ENCODE measurements at regions of chr10 and their contacts with region 1.

Region 1: DNA sequence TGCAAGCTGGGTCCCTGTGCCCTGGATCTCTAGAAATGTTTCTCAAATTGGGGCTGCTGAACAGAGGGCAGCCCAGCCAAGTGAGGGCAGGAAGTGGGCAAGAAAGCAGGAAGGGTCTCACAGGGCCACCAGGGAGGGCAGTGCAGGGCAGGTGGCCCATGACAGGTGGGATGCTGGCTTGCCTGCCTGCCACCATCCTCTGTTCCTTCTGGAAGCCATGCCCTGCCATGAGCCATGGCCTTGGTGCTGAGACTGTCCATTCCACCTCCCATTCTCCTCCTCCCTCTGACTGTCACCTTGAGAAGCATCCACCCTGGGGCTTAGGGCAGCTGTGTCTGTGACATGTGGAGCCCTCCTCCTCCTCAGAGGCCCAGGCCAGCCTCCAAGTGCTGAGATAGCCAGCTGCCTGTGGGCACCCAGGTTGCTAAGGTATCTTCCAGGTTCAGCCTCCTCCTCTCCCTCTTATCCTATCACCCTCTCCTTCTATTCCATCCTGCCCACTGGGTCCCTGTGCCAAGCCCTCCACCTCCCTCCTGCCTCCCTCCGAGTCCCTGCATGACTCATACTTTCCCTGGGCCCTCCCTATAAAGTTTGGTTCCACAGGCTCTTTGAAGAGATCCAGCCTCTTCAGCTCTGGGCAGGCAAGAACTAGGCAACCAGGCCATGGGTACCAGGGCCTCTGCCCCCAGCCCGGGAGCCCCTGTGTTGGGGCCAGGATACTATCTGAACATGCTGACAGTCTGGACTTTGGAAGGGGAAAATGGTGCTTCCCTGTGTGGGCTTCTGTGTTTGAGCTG is 1.3 kb downstream of the VSIR start:
- DNase-seq: peak; percentile 47
- H3K4me3 Mint-ChIP-seq: peak overlapping the region; percentile 90
- H3K27ac Mint-ChIP-seq: peak overlapping the region; percentile 91
- H3K4me1 Mint-ChIP-seq: peaks cover 81% of the 10 kb centered on the region
- H3K27me3 Mint-ChIP-seq: no peaks in the 10 kb centered on the region

Region 2: GRCh38 chr10:71708301-71708703 is 63.7 kb before region 1 on chr10:
- CTCF ChIA-PET with region 1: interaction called, 28 read pairs
- POLR2A ChIA-PET with region 1: interaction called, 10 read pairs
- DNase-seq: peak; percentile 73
- H3K4me3 Mint-ChIP-seq: no peak overlapping the region
- H3K27ac Mint-ChIP-seq: no peak overlapping the region
- H3K4me1 Mint-ChIP-seq: peaks cover 32% of the 10 kb centered on the region
- H3K27me3 Mint-ChIP-seq: no peaks in the 10 kb centered on the region

Region 3: GRCh38 chr10:71719042-71719441 is 53.0 kb before region 1 on chr10:
- CTCF ChIA-PET with region 1: interaction called, 78 read pairs
- POLR2A ChIA-PET with region 1: interaction called, 162 read pairs
- DNase-seq: no peak
- H3K4me3 Mint-ChIP-seq: no peak overlapping the region
- H3K27ac Mint-ChIP-seq: no peak overlapping the region
- H3K4me1 Mint-ChIP-seq: peaks cover 33% of the 10 kb centered on the region
- H3K27me3 Mint-ChIP-seq: no peaks in the 10 kb centered on the region

Region 4: DNA sequence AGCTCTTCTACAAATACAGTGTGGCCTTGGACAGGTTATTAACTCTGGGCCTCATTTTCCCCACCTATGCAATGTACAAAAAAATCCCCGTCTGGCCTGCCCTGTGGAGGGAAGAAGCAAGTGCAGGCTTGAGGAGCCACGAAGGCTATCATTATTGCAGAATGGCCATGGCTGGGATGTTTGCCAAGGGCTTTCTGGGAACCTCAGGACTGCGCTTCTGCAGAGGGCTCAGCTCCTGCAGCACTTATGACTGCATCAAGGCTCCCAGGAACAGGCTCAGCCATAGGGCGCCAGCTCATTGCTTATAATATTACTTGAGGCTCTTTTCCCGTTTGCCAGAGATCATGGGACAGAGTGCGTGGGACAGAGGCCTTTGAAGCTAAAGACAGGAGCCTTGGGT is 31.9 kb before region 1 on chr10:
- CTCF ChIA-PET with region 1: interaction called, 20 read pairs
- POLR2A ChIA-PET with region 1: interaction called, 62 read pairs
- DNase-seq: no peak
- H3K4me3 Mint-ChIP-seq: no peak overlapping the region
- H3K27ac Mint-ChIP-seq: no peak overlapping the region
- H3K4me1 Mint-ChIP-seq: peaks cover 90% of the 10 kb centered on the region
- H3K27me3 Mint-ChIP-seq: no peaks in the 10 kb centered on the region

Region 5: DNA sequence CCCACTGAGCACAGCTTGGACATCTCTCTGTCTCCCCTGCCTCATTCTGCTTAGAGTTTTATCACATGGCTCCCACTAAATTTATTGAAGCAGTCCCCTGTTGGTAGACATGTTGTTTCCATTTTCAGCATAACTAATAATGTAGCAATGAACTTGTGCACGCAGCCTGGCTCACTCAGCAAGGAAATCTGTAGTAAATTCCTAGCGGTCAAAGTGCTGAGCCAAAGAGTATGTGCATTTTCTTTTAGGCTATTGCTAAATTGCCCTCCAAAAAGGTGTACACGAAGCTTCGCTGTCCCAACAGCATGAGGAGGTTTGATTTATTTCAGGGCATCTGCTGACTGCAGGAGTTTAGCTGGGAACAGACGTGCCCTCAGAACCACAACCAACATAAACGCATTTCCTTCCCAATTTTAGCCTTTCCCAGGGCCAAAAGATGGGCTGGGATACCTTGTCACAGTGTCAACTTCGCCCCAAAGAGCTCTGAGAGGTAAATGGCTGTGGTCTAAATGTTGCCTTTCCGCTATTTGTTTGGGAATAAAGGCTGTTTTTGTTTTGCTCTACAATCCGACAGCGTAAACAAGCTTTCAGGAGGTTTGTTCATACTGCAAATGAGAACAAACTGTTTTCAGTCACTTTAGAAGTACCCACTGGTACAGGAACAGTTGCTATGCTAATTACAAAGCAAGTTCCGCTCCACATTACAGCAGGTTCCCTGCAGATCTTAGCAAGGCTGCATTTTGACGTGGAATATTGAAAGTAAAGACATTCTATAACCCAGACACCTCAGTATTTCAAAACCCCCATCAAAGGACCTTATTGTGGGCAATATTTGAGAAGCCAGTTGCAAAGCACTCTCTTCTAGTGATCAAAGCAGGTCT is 15.5 kb before region 1 on chr10:
- CTCF ChIA-PET with region 1: interaction called, 42 read pairs
- POLR2A ChIA-PET with region 1: interaction called, 142 read pairs
- DNase-seq: no peak
- H3K4me3 Mint-ChIP-seq: peak overlapping the region; percentile 21
- H3K27ac Mint-ChIP-seq: peak overlapping the region; percentile 87
- H3K4me1 Mint-ChIP-seq: peaks cover 78% of the 10 kb centered on the region
- H3K27me3 Mint-ChIP-seq: no peaks in the 10 kb centered on the region

Region 6: GRCh38 chr10:72162978-72163377 is 391.0 kb after region 1 on chr10:
- CTCF ChIA-PET with region 1: no interaction called
- POLR2A ChIA-PET with region 1: no interaction called
- DNase-seq: no peak
- H3K4me3 Mint-ChIP-seq: no peak overlapping the region
- H3K27ac Mint-ChIP-seq: peak overlapping the region; percentile 11
- H3K4me1 Mint-ChIP-seq: peaks cover 16% of the 10 kb centered on the region
- H3K27me3 Mint-ChIP-seq: no peaks in the 10 kb centered on the region

Measured in activated CD4-positive, alpha-beta memory T cell treated with anti-CD3 and anti-CD28 coated beads, Interleukin-2, amount 10 ng/mL, durations not matched to agents 7 days and 5 days (primary cell).